Endothelial cell of umbilical vein (primary cell): ENCODE measurements at regions of chr5 and their contacts with region 1.

Region 1: DNA sequence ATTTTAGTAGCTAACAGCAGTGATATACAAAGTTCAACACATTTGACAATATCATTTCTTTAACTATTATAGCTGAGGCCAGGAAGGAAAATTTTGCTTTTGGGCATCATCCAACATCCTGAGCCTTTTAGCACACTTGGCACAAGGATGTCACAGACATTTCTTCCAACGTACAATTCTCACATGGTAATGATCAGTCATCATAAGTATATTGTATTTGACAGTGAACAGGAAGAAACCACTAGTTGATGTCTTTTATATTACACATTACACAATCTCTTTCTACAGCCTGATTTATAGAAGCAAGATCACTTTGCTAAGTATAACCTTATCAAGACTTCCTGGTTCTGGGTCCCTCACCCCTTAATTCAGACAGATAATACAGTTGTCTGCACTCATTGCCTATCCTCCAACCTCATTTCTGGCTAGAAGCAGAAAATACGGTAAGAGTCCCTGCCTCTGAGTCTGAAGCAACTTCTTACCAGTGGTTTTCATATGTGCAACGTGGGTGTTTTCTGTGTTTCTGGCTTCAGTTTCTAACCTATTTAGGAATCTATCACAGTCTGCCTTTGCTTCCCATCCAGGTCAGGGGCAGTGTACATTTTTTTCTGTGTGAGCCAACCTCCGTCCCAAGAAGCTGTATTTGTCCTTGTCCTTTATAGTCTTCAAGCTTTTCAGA is 167.8 kb downstream of the PAM start:
- DNase-seq: peak; percentile 63
- H3K4me3 ChIP-seq: no peak overlapping the region
- H3K27ac ChIP-seq: no peak overlapping the region
- H3K4me1 ChIP-seq: peaks cover 3% of the 10 kb centered on the region
- H3K27me3 ChIP-seq: no peaks in the 10 kb centered on the region
- CTCF ChIP-seq: no peak
- POLR2A ChIP-seq: no peak

Region 2: DNA sequence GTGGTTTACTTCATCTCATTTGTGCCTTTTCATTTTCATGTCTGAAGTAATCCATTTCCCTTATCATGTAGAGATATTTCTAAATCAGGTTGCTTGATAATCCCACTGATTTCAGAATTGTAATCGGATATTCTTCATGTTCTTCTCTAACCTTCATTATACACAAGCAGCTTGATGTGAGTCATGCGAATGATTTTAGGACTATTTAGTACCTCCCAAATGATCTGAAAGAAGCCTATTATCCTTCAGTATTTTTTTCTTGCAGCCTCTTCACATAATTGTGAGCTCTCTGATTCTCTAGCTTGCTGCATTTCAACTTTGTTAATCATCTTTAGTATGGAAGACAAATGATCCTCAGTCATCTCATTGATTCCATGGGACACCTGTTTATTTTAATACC is 15.0 kb after region 1 on chr5:
- CTCF ChIA-PET with region 1: interaction called, 3 read pairs
- POLR2A ChIA-PET with region 1: no interaction called
- dilution Hi-C with region 1: no loop called
- intact Hi-C with region 1: loop called (anchors 2 kb)
- DNase-seq: no peak
- H3K4me3 ChIP-seq: no peak overlapping the region
- H3K27ac ChIP-seq: no peak overlapping the region
- H3K4me1 ChIP-seq: no peaks in the 10 kb centered on the region
- H3K27me3 ChIP-seq: no peaks in the 10 kb centered on the region
- CTCF ChIP-seq: no peak
- POLR2A ChIP-seq: no peak

Region 3: DNA sequence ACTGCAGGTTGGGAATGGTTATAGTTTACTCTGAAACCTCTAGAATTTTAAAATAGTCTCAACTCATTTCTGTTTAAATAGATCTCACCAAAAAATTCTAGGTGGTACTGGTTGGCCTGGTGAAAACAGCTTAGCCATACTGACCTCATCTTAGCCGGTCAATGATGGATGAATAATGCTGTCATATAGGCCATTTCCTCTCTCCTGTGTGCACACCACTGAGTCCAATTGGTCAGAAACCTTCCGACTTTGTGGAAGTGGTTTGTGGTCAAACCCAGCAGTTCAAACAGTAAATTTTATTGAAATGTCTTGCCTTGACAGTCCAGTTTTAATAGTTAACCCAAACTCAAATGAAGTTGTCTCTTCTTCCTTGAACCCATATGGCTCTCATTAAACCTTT is 98.4 kb after region 1 on chr5:
- CTCF ChIA-PET with region 1: no interaction called
- POLR2A ChIA-PET with region 1: no interaction called
- dilution Hi-C with region 1: no loop called
- intact Hi-C with region 1: loop called (anchors 5 kb)
- DNase-seq: no peak
- H3K4me3 ChIP-seq: no peak overlapping the region
- H3K27ac ChIP-seq: no peak overlapping the region
- H3K4me1 ChIP-seq: no peaks in the 10 kb centered on the region
- H3K27me3 ChIP-seq: no peaks in the 10 kb centered on the region
- CTCF ChIP-seq: no peak
- POLR2A ChIP-seq: no peak